ENCODE measurements at regions of chr3 and their contacts with region 1.

Region 1: GRCh38 chr3:3170998-3171397 is 8.5 kb downstream of the CRBN start:
- DNase-seq: peak in 7 of 9 donors; percentile 26 to 56 (median 47)
- ATAC-seq: peak; percentile 73
- H3K4me3 ChIP-seq: no peak overlapping the region
- H3K4me3 Mint-ChIP-seq: peak overlapping the region in 9 of 10 donors; percentile 20 to 91 (median 53)
- H3K27ac ChIP-seq: peak overlapping the region; percentile 87
- H3K27ac Mint-ChIP-seq: peak overlapping the region; percentile 35 to 98 (median 94)
- H3K4me1 ChIP-seq: peaks cover 24 to 50% of the 10 kb centered on the region in 2 donors
- H3K4me1 Mint-ChIP-seq: peaks cover 41 to 94% (median 73%) of the 10 kb centered on the region in 7 donors
- H3K27me3 ChIP-seq: no peaks in the 10 kb centered on the region
- H3K27me3 Mint-ChIP-seq: no peaks in the 10 kb centered on the region

Region 2: GRCh38 chr3:2765002-2765579 is 405.9 kb before region 1 on chr3:
- CTCF ChIA-PET with region 1: interaction called, 4 read pairs
- POLR2A ChIA-PET with region 1: no interaction called
- intact Hi-C with region 1: loop called (anchors 1 to 2 kb)
- DNase-seq: peak in 5 of 9 donors; percentile 2 to 32 (median 17)
- ATAC-seq: peak; percentile 73
- H3K4me3 ChIP-seq: no peak overlapping the region
- H3K4me3 Mint-ChIP-seq: peak overlapping the region in 4 of 10 donors; percentile 47 to 63 (median 51)
- H3K27ac ChIP-seq: no peak overlapping the region
- H3K27ac Mint-ChIP-seq: no peak overlapping the region
- H3K4me1 ChIP-seq: no peaks in the 10 kb centered on the region
- H3K4me1 Mint-ChIP-seq: peaks cover 0 to 4% (median 0%) of the 10 kb centered on the region in 7 donors
- H3K27me3 ChIP-seq: peaks cover 0 to 3% of the 10 kb centered on the region in 2 donors
- H3K27me3 Mint-ChIP-seq: peaks cover 0 to 12% (median 7%) of the 10 kb centered on the region in 5 donors

Region 3: GRCh38 chr3:2993736-2994135 is 177.3 kb before region 1 on chr3:
- CTCF ChIA-PET with region 1: no interaction called
- POLR2A ChIA-PET with region 1: no interaction called
- intact Hi-C with region 1: no loop called
- DNase-seq: no peak
- ATAC-seq: no peak
- H3K4me3 ChIP-seq: no peak overlapping the region
- H3K4me3 Mint-ChIP-seq: no peak overlapping the region
- H3K27ac ChIP-seq: no peak overlapping the region
- H3K27ac Mint-ChIP-seq: no peak overlapping the region
- H3K4me1 ChIP-seq: no peaks in the 10 kb centered on the region
- H3K4me1 Mint-ChIP-seq: peaks cover 0 to 13% (median 6%) of the 10 kb centered on the region in 7 donors
- H3K27me3 ChIP-seq: no peaks in the 10 kb centered on the region
- H3K27me3 Mint-ChIP-seq: peaks cover 0 to 14% (median 0%) of the 10 kb centered on the region in 5 donors

Region 4: DNA sequence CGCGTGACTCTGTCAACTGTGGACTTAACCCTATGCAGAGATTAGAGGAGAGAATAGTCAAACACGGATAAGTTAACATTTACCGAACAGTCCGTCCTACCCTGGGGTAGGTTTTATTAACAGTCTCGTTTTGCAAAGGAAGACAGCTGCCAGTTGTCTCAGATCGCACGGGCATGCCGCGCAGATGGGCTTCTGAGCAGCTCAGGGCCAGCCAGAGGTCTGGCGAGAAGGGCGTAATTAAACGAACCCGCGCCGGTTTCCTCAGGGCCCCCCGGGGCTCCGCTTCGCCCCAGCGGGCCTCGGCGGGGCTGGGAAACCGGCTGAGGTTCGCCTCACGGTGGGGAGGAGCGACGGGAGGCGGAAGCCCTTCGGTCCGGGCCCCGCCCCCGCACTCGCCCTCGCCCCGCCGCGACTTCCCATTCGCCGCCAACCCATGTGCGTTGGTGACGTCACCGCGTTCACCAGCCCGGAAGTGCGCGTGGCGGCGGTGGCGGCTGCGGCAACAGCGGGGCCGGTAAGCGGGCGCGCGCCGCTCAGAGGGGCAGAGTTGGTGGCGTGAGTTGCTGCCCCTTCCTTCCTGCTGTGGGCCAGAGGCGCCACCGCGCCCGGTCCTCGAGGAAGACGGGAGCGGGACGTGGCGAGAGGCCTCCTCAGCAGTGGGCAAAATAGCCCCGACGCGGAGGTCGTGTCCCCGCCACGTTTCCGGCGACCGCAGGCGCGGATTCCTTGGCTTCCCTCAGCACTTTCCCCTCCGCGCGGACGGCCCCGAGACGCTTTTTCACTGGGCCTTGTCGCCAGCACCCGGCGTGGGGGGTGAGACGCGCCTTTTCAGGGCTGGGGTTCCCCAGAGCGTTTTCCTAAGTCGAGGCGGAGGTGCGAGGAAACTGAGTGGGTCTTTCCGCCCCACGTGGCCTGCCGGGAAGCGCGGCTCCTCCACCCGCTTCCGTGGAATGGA is 44.2 kb before region 1 on chr3 and contains the start of gene TRNT1:
- CTCF ChIA-PET with region 1: no interaction called
- POLR2A ChIA-PET with region 1: interaction called, 3 read pairs
- intact Hi-C with region 1: loop called in 1 of 2 experiments (anchors 1 kb)
- DNase-seq: peak; percentile 92 to 97 (median 96)
- ATAC-seq: peak; percentile 97
- H3K4me3 ChIP-seq: peak within 1 kb of the TSS; percentile 92
- H3K4me3 Mint-ChIP-seq: peak within 1 kb of the TSS; percentile 94 to 100 (median 96)
- H3K27ac ChIP-seq: peak within 1 kb of the TSS; percentile 96
- H3K27ac Mint-ChIP-seq: peak within 1 kb of the TSS; percentile 96 to 99 (median 97)
- H3K4me1 ChIP-seq: peaks cover 10 to 25% of the 10 kb centered on the region in 2 donors
- H3K4me1 Mint-ChIP-seq: peaks cover 12 to 48% (median 42%) of the 10 kb centered on the region in 7 donors
- H3K27me3 ChIP-seq: no peaks in the 10 kb centered on the region
- H3K27me3 Mint-ChIP-seq: no peaks in the 10 kb centered on the region
- total RNA-seq, gene TRNT1: 36.4 to 44.5 (median 38.8) TPM

Region 5: DNA sequence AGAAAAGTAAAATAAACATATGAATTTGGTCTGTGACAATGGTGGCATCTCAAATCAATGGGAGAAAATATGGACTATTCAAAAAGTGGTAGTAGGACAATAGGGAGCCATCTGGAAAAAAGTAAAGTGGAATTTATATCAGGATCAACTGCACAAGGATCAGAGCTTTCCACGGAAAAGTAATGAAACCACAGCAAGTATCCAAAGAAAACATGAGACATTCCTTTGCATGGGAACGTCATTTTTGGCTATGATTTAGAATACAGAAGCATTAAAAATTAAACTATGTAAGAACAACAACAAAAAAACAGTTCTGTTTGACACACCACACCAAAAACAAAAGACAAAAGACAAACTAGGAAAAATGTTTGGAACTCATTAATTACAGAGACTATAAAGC is 10.2 kb before region 1 on chr3:
- CTCF ChIA-PET with region 1: interaction called, 6 read pairs
- POLR2A ChIA-PET with region 1: interaction called, 3 read pairs
- intact Hi-C with region 1: loop called in 1 of 2 experiments (anchors 1 kb)
- DNase-seq: no peak
- ATAC-seq: no peak
- H3K4me3 ChIP-seq: no peak overlapping the region
- H3K4me3 Mint-ChIP-seq: no peak overlapping the region
- H3K27ac ChIP-seq: peak overlapping the region; percentile 4
- H3K27ac Mint-ChIP-seq: peak overlapping the region in 8 of 9 donors; percentile 15 to 85 (median 72)
- H3K4me1 ChIP-seq: peaks cover 0 to 4% of the 10 kb centered on the region in 2 donors
- H3K4me1 Mint-ChIP-seq: peaks cover 5 to 96% (median 84%) of the 10 kb centered on the region in 7 donors
- H3K27me3 ChIP-seq: no peaks in the 10 kb centered on the region
- H3K27me3 Mint-ChIP-seq: no peaks in the 10 kb centered on the region

Region 6: GRCh38 chr3:3648988-3649679 is 478.1 kb after region 1 on chr3:
- CTCF ChIA-PET with region 1: no interaction called
- POLR2A ChIA-PET with region 1: no interaction called
- intact Hi-C with region 1: no loop called
- DNase-seq: no peak
- ATAC-seq: no peak
- H3K4me3 ChIP-seq: no peak overlapping the region
- H3K4me3 Mint-ChIP-seq: no peak overlapping the region
- H3K27ac ChIP-seq: no peak overlapping the region
- H3K27ac Mint-ChIP-seq: no peak overlapping the region
- H3K4me1 ChIP-seq: no peaks in the 10 kb centered on the region
- H3K4me1 Mint-ChIP-seq: peaks cover 0 to 2% (median 0%) of the 10 kb centered on the region in 7 donors
- H3K27me3 ChIP-seq: no peaks in the 10 kb centered on the region
- H3K27me3 Mint-ChIP-seq: peaks cover 0 to 22% (median 4%) of the 10 kb centered on the region in 5 donors